Activated B cell treated with CpG ODN at 0.5 μM for 24 hours (primary cell): ENCODE measurements at regions of chr5 and their contacts with region 1.

Region 1: DNA sequence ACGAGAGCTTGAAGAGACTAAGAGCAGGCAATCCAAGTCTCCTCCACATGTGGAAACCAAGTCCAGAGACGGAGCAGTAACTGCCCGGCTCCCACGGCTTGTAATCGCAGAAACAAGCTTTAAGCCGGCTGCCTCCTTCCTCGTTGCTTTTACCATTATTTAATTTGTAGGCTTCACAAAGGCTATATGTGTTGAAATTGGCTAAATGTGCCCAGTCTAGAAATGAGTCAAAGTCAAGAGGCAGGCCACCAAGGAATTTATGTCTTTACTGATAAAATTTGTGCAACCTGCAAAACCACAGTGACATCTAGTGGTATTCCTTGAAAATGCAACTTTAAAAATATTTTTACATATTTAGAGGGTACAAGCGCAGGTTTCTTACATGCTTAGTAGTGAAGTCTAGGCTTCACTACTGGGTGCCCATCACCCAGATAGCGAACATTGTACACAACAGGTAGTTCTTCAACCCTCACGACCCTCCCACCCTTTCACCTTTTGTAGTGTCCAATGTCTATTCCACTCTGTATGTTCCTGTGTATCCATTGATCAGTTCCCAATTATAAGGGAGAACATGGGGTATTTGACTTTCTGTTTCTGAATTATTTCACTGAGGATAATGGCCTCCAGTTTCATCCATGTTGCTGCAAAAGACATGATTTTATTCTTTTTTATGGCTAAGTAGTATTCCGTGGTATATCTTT is 33.5 kb upstream of the EBF1 start:
- DNase-seq: no peak
- ATAC-seq: peak; percentile 50
- H3K4me3 Mint-ChIP-seq: no peak overlapping the region
- H3K27ac Mint-ChIP-seq: no peak overlapping the region
- H3K4me1 Mint-ChIP-seq: no peaks in the 10 kb centered on the region
- H3K27me3 Mint-ChIP-seq: no peaks in the 10 kb centered on the region
- CTCF ChIP-seq: peak; percentile 82

Region 2: DNA sequence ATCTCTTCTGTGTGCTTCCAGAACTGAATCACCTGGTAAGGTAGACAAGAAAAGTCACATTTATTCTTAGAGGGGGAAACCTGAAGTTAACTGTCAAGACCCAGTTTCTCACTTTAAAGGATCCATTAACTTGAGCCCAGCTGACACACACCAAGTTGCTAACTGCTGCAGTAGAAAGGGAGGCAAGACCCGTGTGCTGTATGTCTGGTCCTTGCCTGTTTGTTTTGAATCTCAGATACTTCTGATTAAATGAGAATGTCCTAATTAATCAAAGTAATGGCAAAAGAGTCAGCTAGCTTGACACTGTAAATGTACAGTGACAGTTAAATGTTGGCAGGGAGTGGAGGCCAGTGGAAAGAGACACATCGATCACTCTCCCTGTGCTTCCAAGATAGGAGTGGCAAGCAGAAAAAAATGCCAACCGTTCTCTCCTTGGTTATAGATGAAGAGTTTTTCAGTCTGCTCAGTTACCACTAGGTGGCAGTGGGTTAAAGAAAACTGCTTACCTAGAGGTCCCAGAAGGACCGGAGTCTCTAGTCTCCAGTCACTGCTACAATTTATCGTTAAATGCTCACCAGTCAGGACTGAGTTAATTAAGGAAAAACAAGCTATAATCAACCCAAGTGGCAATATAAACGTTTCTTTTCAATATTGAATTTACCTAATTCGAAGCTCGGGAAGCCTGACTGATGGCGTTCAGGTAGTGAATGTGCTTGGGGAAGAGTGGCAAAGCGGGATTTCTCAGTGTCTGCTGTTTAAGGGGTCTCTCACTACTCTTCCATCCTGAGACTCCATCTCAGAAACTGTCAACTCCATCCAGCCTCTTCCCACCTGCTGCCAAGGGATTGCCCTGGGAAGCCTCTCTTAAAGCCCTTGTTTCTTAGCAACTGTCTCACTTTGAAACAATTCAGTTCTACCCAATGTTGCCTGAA is 1371.2 kb before region 1 on chr5:
- CTCF ChIA-PET with region 1: interaction called, 6 read pairs
- POLR2A ChIA-PET with region 1: no interaction called
- intact Hi-C with region 1: loop called (anchors 1 kb)
- DNase-seq: no peak
- ATAC-seq: peak; percentile 87
- H3K4me3 Mint-ChIP-seq: no peak overlapping the region
- H3K27ac Mint-ChIP-seq: no peak overlapping the region
- H3K4me1 Mint-ChIP-seq: no peaks in the 10 kb centered on the region
- H3K27me3 Mint-ChIP-seq: no peaks in the 10 kb centered on the region
- CTCF ChIP-seq: peak; percentile 17

Region 3: GRCh38 chr5:157820593-157821252 is 1312.5 kb before region 1 on chr5:
- CTCF ChIA-PET with region 1: interaction called, 25 read pairs
- POLR2A ChIA-PET with region 1: no interaction called
- intact Hi-C with region 1: loop called (anchors 1 kb)
- DNase-seq: no peak
- ATAC-seq: no peak
- H3K4me3 Mint-ChIP-seq: no peak overlapping the region
- H3K27ac Mint-ChIP-seq: peak overlapping the region; percentile 12
- H3K4me1 Mint-ChIP-seq: peaks cover 25% of the 10 kb centered on the region
- H3K27me3 Mint-ChIP-seq: no peaks in the 10 kb centered on the region
- CTCF ChIP-seq: no peak

Region 4: GRCh38 chr5:157994906-157995519 is 1138.2 kb before region 1 on chr5:
- CTCF ChIA-PET with region 1: interaction called, 3 read pairs
- POLR2A ChIA-PET with region 1: no interaction called
- intact Hi-C with region 1: loop called (anchors 1 kb)
- DNase-seq: peak; percentile 21
- ATAC-seq: peak; percentile 84
- H3K4me3 Mint-ChIP-seq: no peak overlapping the region
- H3K27ac Mint-ChIP-seq: no peak overlapping the region
- H3K4me1 Mint-ChIP-seq: no peaks in the 10 kb centered on the region
- H3K27me3 Mint-ChIP-seq: peaks cover 2% of the 10 kb centered on the region
- CTCF ChIP-seq: no peak

Region 5: GRCh38 chr5:158013939-158014338 is 1119.3 kb before region 1 on chr5:
- CTCF ChIA-PET with region 1: interaction called, 3 read pairs
- POLR2A ChIA-PET with region 1: no interaction called
- intact Hi-C with region 1: loop called (anchors 2 kb)
- DNase-seq: no peak
- ATAC-seq: no peak
- H3K4me3 Mint-ChIP-seq: no peak overlapping the region
- H3K27ac Mint-ChIP-seq: no peak overlapping the region
- H3K4me1 Mint-ChIP-seq: no peaks in the 10 kb centered on the region
- H3K27me3 Mint-ChIP-seq: peaks cover 22% of the 10 kb centered on the region
- CTCF ChIP-seq: no peak

Region 6: GRCh38 chr5:158074992-158075769 is 1058.0 kb before region 1 on chr5:
- CTCF ChIA-PET with region 1: interaction called, 47 read pairs
- POLR2A ChIA-PET with region 1: interaction called, 4 read pairs
- intact Hi-C with region 1: loop called (anchors 1 kb)
- DNase-seq: peak; percentile 48
- ATAC-seq: peak; percentile 95
- H3K4me3 Mint-ChIP-seq: peak overlapping the region; percentile 42
- H3K27ac Mint-ChIP-seq: peak overlapping the region; percentile 73
- H3K4me1 Mint-ChIP-seq: peaks cover 20% of the 10 kb centered on the region
- H3K27me3 Mint-ChIP-seq: peaks cover 2% of the 10 kb centered on the region
- CTCF ChIP-seq: no peak

Region 7: DNA sequence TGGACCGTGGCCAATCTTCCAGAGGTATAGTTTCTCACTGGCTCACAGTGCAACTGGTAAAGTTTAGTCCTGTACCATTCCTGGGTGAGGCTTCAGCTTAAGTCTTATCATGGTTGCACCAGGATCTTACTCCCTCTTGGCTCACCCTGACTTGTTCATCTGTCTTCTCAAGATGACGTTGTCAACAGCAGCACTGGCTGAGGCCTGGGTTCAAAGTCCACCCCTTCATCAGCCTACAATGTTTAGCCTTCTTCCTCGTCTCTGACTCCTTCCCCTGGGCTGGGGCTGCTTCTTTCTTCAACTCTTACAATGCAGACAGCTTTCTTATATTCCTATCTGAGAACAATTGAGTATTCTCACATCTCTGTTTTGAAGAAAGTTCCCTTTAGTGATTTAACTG is 963.1 kb before region 1 on chr5:
- CTCF ChIA-PET with region 1: interaction called, 27 read pairs
- POLR2A ChIA-PET with region 1: interaction called, 3 read pairs
- intact Hi-C with region 1: loop called (anchors 1 kb)
- DNase-seq: no peak
- ATAC-seq: no peak
- H3K4me3 Mint-ChIP-seq: no peak overlapping the region
- H3K27ac Mint-ChIP-seq: no peak overlapping the region
- H3K4me1 Mint-ChIP-seq: peaks cover 29% of the 10 kb centered on the region
- H3K27me3 Mint-ChIP-seq: no peaks in the 10 kb centered on the region
- CTCF ChIP-seq: no peak

Region 8: GRCh38 chr5:159184858-159185381 is 51.7 kb after region 1 on chr5:
- CTCF ChIA-PET with region 1: no interaction called
- POLR2A ChIA-PET with region 1: no interaction called
- intact Hi-C with region 1: no loop called
- DNase-seq: no peak
- ATAC-seq: peak; percentile 65
- H3K4me3 Mint-ChIP-seq: peak overlapping the region; percentile 53
- H3K27ac Mint-ChIP-seq: peak overlapping the region; percentile 86
- H3K4me1 Mint-ChIP-seq: peaks cover 75% of the 10 kb centered on the region
- H3K27me3 Mint-ChIP-seq: no peaks in the 10 kb centered on the region
- CTCF ChIP-seq: no peak